Activated B cell treated with CpG ODN at 0.5 μM for 24 hours (primary cell): ENCODE measurements at regions of chr6 and their contacts with region 1.

Region 1: GRCh38 chr6:26003102-26003694 is 40.6 kb downstream of the TRIM38 start:
- DNase-seq: no peak
- ATAC-seq: peak; percentile 49
- H3K4me3 Mint-ChIP-seq: no peak overlapping the region
- H3K27ac Mint-ChIP-seq: no peak overlapping the region
- H3K4me1 Mint-ChIP-seq: no peaks in the 10 kb centered on the region
- H3K27me3 Mint-ChIP-seq: no peaks in the 10 kb centered on the region
- CTCF ChIP-seq: peak; percentile 39

Region 2: DNA sequence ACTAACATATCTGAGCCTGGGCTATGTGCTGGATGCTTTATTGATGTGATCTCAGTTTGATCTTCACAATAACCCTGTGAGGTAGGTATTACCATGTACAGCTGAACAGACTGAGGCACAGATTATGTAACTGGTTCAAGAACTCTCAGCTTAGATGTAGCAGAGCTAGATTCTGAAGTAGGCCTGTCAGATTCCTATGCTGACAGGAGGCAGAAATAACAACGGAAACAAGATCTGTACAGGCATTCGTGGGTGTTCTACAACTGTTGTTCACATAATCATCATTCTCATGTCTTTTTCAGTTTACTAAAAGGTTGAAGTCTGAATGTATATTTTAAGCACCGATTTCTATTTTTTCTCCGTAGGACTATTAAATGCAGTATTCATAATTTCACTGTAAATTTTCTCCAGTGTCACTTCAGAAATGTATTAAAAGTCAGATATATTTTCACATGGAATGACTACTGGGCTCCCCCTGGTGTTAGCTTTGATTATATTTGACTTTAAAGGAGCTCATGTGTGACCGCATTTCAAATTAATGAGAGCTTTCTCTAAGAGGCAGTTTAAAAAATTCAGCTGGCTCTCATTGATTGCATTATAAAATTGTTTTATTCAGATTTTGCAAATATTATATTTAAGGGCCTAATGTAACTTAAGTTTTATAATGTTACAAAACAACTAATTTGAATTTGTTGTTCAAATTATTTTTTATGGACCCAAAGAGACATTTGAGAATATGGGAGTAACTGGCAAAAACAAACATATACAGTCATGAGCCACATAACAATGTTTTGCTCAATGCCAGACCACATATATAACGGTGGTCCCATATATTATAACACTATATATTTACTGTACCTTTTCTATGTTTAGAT is 285.1 kb before region 1 on chr6:
- CTCF ChIA-PET with region 1: interaction called, 59 read pairs
- POLR2A ChIA-PET with region 1: interaction called, 3 read pairs
- intact Hi-C with region 1: loop called (anchors 1 kb)
- DNase-seq: no peak
- ATAC-seq: no peak
- H3K4me3 Mint-ChIP-seq: no peak overlapping the region
- H3K27ac Mint-ChIP-seq: no peak overlapping the region
- H3K4me1 Mint-ChIP-seq: no peaks in the 10 kb centered on the region
- H3K27me3 Mint-ChIP-seq: peaks cover 15% of the 10 kb centered on the region
- CTCF ChIP-seq: no peak

Region 3: DNA sequence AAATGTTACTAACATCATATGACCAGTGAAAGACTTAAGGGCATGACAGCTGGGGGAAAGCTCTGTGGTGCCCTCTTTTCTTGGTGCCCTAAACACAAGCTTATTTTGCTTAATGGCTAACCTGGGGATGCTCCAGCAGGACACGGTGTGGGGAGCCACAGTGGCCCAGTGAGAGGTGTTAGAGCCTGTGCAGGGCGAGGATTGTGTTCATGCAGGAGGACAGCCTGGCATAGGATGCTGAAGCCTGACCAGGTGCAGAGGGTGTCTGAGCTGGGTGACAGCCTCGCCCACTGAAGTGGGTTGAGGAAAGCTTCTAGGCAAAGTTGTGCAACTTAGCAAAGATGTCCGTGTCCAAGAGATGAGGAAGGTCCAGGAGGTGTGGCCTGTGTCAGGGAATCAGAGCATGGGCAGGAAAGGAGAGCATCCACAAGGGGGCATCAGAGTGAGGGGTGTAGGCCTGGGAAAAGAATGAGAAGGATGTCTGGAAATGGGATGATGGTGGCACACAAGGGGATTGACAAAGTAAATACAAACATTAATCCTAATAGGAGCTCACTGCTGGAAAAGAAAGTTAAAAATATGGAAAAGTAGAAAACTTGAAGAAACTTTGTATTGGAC is 214.8 kb before region 1 on chr6:
- CTCF ChIA-PET with region 1: interaction called, 36 read pairs
- POLR2A ChIA-PET with region 1: no interaction called
- intact Hi-C with region 1: loop called (anchors 1 kb)
- DNase-seq: no peak
- ATAC-seq: peak; percentile 50
- H3K4me3 Mint-ChIP-seq: no peak overlapping the region
- H3K27ac Mint-ChIP-seq: no peak overlapping the region
- H3K4me1 Mint-ChIP-seq: no peaks in the 10 kb centered on the region
- H3K27me3 Mint-ChIP-seq: peaks cover 3% of the 10 kb centered on the region
- CTCF ChIP-seq: no peak

Region 4: DNA sequence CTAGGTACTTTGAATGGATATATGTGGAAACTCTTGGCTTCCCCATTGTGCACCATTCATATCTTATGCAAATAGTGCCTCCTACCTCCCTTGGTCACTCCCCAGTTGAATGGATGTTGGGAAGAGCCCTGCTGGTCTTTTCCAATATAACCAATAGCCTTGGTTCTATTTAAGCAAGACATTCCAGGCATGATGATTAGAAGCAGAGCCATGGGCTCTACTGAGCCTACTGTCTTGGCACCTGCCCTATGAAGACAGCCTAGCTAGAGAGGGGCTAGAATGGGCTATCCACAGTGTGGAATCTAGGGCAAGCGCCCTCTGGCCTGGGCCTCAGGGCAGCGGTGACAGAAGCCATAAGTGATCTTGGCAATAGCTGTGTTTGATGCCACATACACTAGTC is 186.9 kb before region 1 on chr6:
- CTCF ChIA-PET with region 1: no interaction called
- POLR2A ChIA-PET with region 1: no interaction called
- intact Hi-C with region 1: no loop called
- DNase-seq: no peak
- ATAC-seq: no peak
- H3K4me3 Mint-ChIP-seq: no peak overlapping the region
- H3K27ac Mint-ChIP-seq: no peak overlapping the region
- H3K4me1 Mint-ChIP-seq: no peaks in the 10 kb centered on the region
- H3K27me3 Mint-ChIP-seq: peaks cover 11% of the 10 kb centered on the region
- CTCF ChIP-seq: no peak

Region 5: DNA sequence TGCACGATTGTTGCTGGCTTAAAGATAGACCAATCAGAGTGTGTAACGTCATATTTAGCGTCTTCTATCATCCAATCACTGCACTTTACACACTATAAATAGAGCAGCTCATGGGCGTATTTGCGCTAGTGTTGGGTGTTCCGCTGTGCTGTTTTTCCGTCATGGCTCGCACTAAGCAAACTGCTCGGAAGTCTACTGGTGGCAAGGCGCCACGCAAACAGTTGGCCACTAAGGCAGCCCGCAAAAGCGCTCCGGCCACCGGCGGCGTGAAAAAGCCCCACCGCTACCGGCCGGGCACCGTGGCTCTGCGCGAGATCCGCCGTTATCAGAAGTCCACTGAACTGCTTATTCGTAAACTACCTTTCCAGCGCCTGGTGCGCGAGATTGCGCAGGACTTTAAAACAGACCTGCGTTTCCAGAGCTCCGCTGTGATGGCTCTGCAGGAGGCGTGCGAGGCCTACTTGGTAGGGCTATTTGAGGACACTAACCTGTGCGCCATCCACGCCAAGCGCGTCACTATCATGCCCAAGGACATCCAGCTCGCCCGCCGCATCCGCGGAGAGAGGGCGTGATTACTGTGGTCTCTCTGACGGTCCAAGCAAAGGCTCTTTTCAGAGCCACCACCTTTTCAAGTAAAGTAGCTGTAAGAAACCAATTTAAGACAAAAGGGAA is 17.3 kb after region 1 on chr6:
- CTCF ChIA-PET with region 1: interaction called, 25 read pairs
- POLR2A ChIA-PET with region 1: interaction called, 34 read pairs
- intact Hi-C with region 1: loop called (anchors 1 kb)
- DNase-seq: peak; percentile 71
- ATAC-seq: peak; percentile 51
- H3K4me3 Mint-ChIP-seq: peak overlapping the region; percentile 96
- H3K27ac Mint-ChIP-seq: peak overlapping the region; percentile 99
- H3K4me1 Mint-ChIP-seq: peaks cover 29% of the 10 kb centered on the region
- H3K27me3 Mint-ChIP-seq: no peaks in the 10 kb centered on the region
- CTCF ChIP-seq: no peak